ENCODE measurements at regions of chr9 and their contacts with region 1.

Region 1: DNA sequence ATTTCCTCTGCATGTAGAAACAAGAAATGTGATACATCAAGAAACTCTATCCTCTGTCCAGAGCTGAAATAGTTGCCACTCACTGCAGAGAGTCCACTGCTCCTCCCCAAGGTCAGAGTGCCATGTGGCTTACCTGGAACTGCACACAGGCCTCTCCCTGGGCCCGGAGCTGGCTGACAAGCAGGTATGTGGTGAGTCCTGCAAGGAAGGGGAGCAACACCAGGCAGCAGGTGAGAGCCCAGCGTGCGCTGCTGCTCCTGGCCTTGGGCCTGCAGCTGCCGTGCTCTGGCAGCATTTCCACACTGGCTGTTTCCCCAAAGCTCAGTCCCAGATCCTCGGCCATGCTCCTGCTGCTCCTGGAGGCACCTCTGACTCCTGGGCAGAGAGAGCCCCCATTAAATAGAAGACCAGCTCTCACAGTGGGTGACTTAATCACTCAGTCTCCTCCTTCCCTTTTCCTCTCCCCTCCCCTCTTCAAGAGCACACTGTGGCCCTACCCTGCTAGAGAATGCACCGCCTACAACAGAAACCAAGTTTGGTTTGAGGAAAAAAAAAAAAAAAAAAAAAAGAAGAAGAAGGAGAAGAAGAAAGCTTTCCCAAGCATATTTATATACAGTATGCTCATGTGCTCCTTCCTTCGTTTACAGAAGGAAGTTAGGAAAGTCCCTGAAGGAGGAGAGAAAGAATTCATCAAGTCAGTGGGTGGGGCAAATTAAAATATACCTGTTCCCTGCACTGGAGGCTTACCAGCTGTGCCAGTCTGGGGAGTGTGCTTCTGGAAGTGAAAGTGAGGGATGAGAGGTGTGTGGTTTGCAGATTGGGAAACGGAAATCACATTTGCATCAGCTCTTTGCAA is at the start of gene TNFSF15:
- DNase-seq: peak; percentile 43
- ATAC-seq: peak; percentile 64
- H3K4me3 ChIP-seq: peak within 1 kb of the TSS; percentile 47; the same call in 1 of the 2 replicates
- H3K27ac ChIP-seq: peak within 1 kb of the TSS; percentile 62
- H3K4me1 ChIP-seq: peaks cover 37% of the 10 kb centered on the region
- H3K27me3 ChIP-seq: no peaks in the 10 kb centered on the region
- CTCF ChIP-seq: no peak
- total RNA-seq, gene TNFSF15: 1.7 and 2.2 TPM in 2 replicates

Region 2: DNA sequence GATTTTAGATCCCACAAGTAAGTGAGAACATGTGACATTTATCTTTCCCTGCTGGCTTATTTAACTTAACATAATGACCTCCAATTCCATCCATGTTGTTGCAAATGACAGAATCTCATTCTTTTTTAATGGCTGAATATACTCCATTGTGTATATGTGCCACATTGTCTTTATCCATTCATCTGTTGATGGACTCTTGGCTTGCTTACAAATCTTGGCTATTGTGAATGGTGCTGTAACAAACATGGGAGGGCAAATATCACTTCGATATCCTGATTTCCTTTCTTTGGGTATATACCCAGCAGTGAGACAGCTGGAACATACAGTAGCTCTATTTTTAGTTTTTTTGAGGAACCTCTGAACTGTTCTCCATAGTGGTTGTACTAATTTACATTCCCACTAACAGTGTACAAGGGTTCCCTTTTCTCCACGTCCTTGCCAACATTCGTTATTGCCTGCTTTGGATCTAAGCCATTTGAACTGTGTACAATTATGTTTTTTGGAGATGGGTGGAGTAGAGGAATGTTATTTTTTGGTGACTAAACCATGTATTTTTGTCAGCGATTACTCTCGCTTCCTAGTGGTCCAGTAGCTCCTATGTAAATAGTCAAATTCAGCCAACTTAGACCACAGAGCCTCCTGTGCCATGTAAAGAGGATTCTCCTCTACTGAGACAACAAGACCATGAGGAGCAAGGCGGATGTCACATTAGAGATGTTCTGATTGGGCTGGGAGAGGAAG is 60.6 kb before region 1 on chr9:
- CTCF ChIA-PET with region 1: no interaction called
- POLR2A ChIA-PET with region 1: no interaction called
- intact Hi-C with region 1: loop called (anchors 10 kb)
- DNase-seq: peak; percentile 83
- ATAC-seq: peak; percentile 83
- H3K4me3 ChIP-seq: no peak overlapping the region
- H3K27ac ChIP-seq: peak overlapping the region; percentile 50
- H3K4me1 ChIP-seq: peaks cover 25% of the 10 kb centered on the region
- H3K27me3 ChIP-seq: no peaks in the 10 kb centered on the region
- CTCF ChIP-seq: no peak

Region 3: GRCh38 chr9:114790521-114790920 is 15.4 kb before region 1 on chr9:
- CTCF ChIA-PET with region 1: no interaction called
- POLR2A ChIA-PET with region 1: no interaction called
- intact Hi-C with region 1: no loop called
- DNase-seq: no peak
- ATAC-seq: no peak
- H3K4me3 ChIP-seq: no peak overlapping the region
- H3K27ac ChIP-seq: no peak overlapping the region
- H3K4me1 ChIP-seq: peaks cover 6% of the 10 kb centered on the region; the same call in 1 of the 2 replicates
- H3K27me3 ChIP-seq: no peaks in the 10 kb centered on the region
- CTCF ChIP-seq: no peak

Region 4: GRCh38 chr9:114823441-114823840 is 17.5 kb after region 1 on chr9:
- CTCF ChIA-PET with region 1: no interaction called
- POLR2A ChIA-PET with region 1: interaction called, 10 read pairs
- intact Hi-C with region 1: no loop called
- DNase-seq: no peak
- ATAC-seq: no peak
- H3K4me3 ChIP-seq: no peak overlapping the region
- H3K27ac ChIP-seq: no peak overlapping the region
- H3K4me1 ChIP-seq: no peaks in the 10 kb centered on the region
- H3K27me3 ChIP-seq: no peaks in the 10 kb centered on the region
- CTCF ChIP-seq: no peak

Region 5: GRCh38 chr9:114836769-114837168 is 30.9 kb after region 1 on chr9:
- CTCF ChIA-PET with region 1: no interaction called
- POLR2A ChIA-PET with region 1: no interaction called
- intact Hi-C with region 1: no loop called
- DNase-seq: peak; percentile 17
- ATAC-seq: no peak
- H3K4me3 ChIP-seq: no peak overlapping the region
- H3K27ac ChIP-seq: no peak overlapping the region
- H3K4me1 ChIP-seq: peaks cover 9% of the 10 kb centered on the region
- H3K27me3 ChIP-seq: no peaks in the 10 kb centered on the region
- CTCF ChIP-seq: no peak

Region 6: GRCh38 chr9:114988962-114989599 is 183.2 kb after region 1 on chr9:
- CTCF ChIA-PET with region 1: no interaction called
- POLR2A ChIA-PET with region 1: no interaction called
- intact Hi-C with region 1: no loop called
- DNase-seq: peak; percentile 80
- ATAC-seq: peak; percentile 92
- H3K4me3 ChIP-seq: no peak overlapping the region
- H3K27ac ChIP-seq: peak overlapping the region; percentile 49
- H3K4me1 ChIP-seq: peaks cover 14% of the 10 kb centered on the region
- H3K27me3 ChIP-seq: no peaks in the 10 kb centered on the region
- CTCF ChIP-seq: no peak

Measured in PC-3 (cell line).